ENCODE measurements at regions of chr4 and their contacts with region 1.

Region 1: DNA sequence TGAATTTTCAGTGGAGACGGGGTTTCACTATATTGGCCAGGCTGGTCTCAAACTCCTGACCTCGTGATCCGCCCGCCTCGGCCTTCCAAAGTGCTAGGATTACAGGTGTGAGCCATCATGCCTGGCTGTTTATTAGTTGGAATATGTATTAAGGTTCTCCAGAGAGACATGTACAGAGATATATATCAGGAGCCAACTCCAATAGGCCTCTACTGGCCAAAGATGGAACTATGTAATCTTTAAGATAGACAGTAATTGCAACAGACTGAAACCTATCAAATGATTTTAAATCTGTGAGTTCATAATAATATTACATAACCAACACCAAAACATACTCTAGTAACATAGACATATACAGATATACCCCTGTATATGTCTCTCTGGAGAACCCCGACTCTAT is 5.8 kb upstream of the DMP1 start:
- DNase-seq: no peak
- CTCF ChIP-seq: no peak

Region 2: GRCh38 chr4:87624698-87625097 is 19.6 kb before region 1 on chr4:
- CTCF ChIA-PET with region 1: interaction called, 12 read pairs
- POLR2A ChIA-PET with region 1: no interaction called
- DNase-seq: no peak
- CTCF ChIP-seq: no peak

Region 3: GRCh38 chr4:87657525-87657924 is 13.2 kb after region 1 on chr4:
- CTCF ChIA-PET with region 1: no interaction called
- POLR2A ChIA-PET with region 1: no interaction called
- DNase-seq: no peak
- CTCF ChIP-seq: no peak

Measured in GM10248 (cell line).